ENCODE measurements at regions of chr18 and their contacts with region 1.

Region 1: DNA sequence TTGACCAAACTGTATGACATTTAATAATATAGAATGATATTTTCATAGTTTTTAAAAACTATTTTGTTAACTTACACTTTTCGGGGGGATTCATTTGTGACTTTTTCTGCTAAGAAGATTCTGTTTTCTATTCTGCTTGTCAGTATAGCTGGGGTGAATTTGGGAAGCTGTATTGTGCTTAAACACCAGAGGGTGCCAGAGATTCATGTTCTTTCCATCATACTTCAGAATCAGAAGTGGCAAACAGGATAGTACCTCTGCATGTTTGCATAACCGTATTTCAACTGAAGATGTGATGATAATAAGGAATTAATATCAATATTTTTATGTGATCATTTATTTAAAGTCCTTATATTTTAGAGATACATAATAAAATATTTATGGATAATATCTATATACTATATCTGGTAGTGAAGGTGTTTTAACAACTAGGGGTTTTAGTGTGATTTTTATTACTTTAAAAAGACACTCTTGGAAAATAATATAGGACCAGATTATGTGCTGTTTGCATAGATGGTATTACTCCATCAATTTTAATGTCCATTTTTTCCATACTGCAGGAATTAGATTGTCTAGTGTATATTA is 81.0 kb downstream of the TAF4B start:
- DNase-seq: no peak
- H3K4me3 ChIP-seq: no peak overlapping the region
- H3K27ac ChIP-seq: no peak overlapping the region
- H3K4me1 ChIP-seq: no peaks in the 10 kb centered on the region
- H3K27me3 ChIP-seq: no peaks in the 10 kb centered on the region
- CTCF ChIP-seq: peak in 2 of 4 experiments; percentile 36 to 54
- EP300 ChIP-seq: no peak
- POLR2A ChIP-seq: no peak

Region 2: DNA sequence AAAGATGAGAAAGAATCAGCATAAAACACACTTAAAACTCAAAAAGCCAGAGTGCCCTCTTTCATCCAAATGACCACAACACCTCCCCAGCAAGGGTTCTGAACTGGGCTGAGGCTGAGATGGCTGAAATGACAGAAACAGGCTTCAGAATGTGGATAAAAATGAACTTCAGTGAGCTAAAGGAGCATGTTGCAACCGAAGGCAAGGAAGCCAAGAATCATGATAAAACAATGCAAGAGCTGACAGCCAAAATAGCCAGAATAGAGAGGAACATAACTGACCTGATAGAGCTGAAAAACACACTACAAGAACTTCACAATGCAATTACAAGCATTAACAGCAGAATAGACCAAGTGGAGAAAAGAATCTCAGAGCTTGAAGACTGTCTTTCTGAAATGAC is 185.8 kb before region 1 on chr18:
- intact Hi-C with region 1: no loop called
- DNase-seq: no peak
- H3K4me3 ChIP-seq: no peak overlapping the region
- H3K27ac ChIP-seq: no peak overlapping the region
- H3K4me1 ChIP-seq: no peaks in the 10 kb centered on the region
- H3K27me3 ChIP-seq: no peaks in the 10 kb centered on the region
- CTCF ChIP-seq: no peak
- EP300 ChIP-seq: no peak
- POLR2A ChIP-seq: no peak

Region 3: DNA sequence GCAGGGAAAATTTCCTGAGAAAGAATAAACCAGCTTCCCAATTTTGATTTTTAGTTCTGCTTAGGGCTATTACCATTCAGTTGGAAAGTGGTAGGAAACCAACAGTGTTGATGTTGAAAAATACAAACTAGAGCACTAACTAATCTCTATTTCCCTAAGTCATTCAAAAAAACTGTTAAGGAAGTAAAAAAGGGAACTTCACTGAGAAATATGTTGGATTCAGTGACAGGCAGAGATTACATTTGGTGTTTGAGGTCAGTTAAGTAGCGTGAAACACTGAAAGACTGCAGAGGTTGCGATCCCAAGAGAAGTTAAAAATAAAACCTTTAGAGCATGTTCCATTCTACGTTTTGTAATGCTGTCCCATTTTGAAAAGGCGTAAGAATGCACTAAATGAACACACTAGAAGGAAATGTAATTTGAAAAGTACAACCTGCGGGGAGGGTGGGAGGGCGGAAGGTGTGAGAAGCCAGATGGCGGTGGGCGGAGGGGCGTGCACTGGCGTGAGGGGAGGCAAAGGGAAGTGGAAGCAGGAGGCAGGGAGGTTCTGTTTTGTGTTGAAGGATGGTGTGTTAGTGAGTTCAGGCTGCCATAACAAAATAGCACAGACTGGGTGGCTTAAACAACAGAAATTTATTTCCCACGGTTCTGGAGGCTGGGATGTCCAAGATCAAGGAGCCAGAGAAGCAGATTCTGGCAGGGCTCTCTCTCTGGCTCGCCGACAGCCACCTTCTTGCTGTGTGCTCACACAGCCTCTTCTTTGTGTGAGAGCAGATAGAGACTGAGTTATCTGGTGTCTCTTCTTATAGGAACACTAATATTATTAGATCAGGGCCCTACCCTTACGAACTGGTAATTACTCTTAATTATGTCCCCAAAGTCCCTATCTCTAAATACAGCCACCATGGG is 335.4 kb after region 1 on chr18:
- intact Hi-C with region 1: loop called (anchors 10 kb)
- DNase-seq: no peak
- H3K4me3 ChIP-seq: no peak overlapping the region
- H3K27ac ChIP-seq: no peak overlapping the region
- H3K4me1 ChIP-seq: no peaks in the 10 kb centered on the region
- H3K27me3 ChIP-seq: no peaks in the 10 kb centered on the region
- CTCF ChIP-seq: no peak
- EP300 ChIP-seq: no peak
- POLR2A ChIP-seq: no peak

Region 4: GRCh38 chr18:26771524-26771923 is 464.2 kb after region 1 on chr18:
- intact Hi-C with region 1: loop called (anchors 5 kb)
- DNase-seq: no peak
- H3K4me3 ChIP-seq: no peak overlapping the region
- H3K27ac ChIP-seq: no peak overlapping the region
- H3K4me1 ChIP-seq: no peaks in the 10 kb centered on the region
- H3K27me3 ChIP-seq: no peaks in the 10 kb centered on the region
- CTCF ChIP-seq: peak in 1 of 4 experiments; percentile 12
- EP300 ChIP-seq: no peak
- POLR2A ChIP-seq: no peak